B cell (primary cell): ENCODE measurements at regions of chr19 and their contacts with region 1.

Region 1: GRCh38 chr19:40190891-40191835 is at the start of gene MAP3K10:
- DNase-seq: peak; percentile 83
- ATAC-seq: peak; percentile 87
- H3K4me3 ChIP-seq: peak within 1 kb of the TSS; percentile 63 to 100 (median 99)
- H3K4me3 Mint-ChIP-seq: peak within 1 kb of the TSS; percentile 94
- H3K27ac ChIP-seq: peak within 1 kb of the TSS; percentile 83 to 85
- H3K27ac Mint-ChIP-seq: peak within 1 kb of the TSS; percentile 95
- H3K4me1 ChIP-seq: peaks cover 10 to 25% of the 10 kb centered on the region in 2 donors
- H3K4me1 Mint-ChIP-seq: peaks cover 31% of the 10 kb centered on the region
- H3K27me3 ChIP-seq: no peaks in the 10 kb centered on the region
- H3K27me3 Mint-ChIP-seq: no peaks in the 10 kb centered on the region
- CTCF ChIP-seq: no peak
- total RNA-seq, gene MAP3K10: 35.9 and 41.6 TPM in 2 replicates

Region 2: DNA sequence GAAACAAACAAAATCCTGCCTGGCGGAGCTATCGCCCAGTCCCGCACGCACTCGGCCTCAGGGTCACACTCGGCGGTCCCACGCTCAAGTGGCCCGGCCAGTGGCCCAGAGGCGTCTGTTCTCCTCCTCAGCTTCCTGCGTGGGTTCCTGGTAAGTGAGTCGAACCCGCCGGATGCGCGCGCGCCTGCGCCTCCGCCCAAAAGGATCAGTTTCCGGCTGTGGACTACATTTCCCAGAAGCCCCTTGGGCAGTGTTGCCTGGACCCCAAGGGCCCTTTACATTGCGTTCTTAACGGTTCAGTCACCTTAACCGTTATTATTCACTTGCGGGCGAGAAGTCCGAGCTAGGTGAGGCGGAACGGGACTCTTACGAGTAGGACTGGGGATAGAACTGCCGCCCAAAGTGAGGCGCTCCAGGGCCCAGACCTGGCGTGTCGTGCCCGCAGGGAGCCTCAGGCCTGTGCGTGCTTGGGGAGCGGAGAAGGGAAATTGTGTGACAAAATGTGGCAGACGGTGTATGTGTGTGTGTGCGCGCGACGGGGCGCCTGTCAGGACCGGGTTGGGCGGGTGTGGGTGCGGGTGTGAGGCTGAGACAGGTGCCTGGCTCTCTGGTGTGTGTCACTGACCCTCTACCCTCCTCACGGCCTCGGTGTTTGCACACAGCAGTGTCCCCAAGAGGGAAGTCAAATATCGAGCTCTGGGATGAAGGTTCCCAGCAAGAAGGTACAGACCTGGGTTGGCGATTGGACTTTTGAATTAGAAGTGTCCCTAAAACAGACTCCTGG is 194.2 kb before region 1 on chr19 and contains the start of gene ZNF546:
- CTCF ChIA-PET with region 1: no interaction called
- POLR2A ChIA-PET with region 1: no interaction called
- intact Hi-C with region 1: loop called (anchors 2 kb)
- DNase-seq: peak; percentile 92
- ATAC-seq: peak; percentile 93
- H3K4me3 ChIP-seq: peak within 1 kb of the TSS; percentile 59 to 98 (median 92)
- H3K4me3 Mint-ChIP-seq: peak within 1 kb of the TSS; percentile 96
- H3K27ac ChIP-seq: peak within 1 kb of the TSS; percentile 78 to 89
- H3K27ac Mint-ChIP-seq: peak within 1 kb of the TSS; percentile 92
- H3K4me1 ChIP-seq: peaks cover 9 to 16% of the 10 kb centered on the region in 2 donors
- H3K4me1 Mint-ChIP-seq: peaks cover 28% of the 10 kb centered on the region
- H3K27me3 ChIP-seq: no peaks in the 10 kb centered on the region
- H3K27me3 Mint-ChIP-seq: no peaks in the 10 kb centered on the region
- CTCF ChIP-seq: no peak
- total RNA-seq, gene ZNF546: 15.7 and 16.6 TPM in 2 replicates

Region 3: DNA sequence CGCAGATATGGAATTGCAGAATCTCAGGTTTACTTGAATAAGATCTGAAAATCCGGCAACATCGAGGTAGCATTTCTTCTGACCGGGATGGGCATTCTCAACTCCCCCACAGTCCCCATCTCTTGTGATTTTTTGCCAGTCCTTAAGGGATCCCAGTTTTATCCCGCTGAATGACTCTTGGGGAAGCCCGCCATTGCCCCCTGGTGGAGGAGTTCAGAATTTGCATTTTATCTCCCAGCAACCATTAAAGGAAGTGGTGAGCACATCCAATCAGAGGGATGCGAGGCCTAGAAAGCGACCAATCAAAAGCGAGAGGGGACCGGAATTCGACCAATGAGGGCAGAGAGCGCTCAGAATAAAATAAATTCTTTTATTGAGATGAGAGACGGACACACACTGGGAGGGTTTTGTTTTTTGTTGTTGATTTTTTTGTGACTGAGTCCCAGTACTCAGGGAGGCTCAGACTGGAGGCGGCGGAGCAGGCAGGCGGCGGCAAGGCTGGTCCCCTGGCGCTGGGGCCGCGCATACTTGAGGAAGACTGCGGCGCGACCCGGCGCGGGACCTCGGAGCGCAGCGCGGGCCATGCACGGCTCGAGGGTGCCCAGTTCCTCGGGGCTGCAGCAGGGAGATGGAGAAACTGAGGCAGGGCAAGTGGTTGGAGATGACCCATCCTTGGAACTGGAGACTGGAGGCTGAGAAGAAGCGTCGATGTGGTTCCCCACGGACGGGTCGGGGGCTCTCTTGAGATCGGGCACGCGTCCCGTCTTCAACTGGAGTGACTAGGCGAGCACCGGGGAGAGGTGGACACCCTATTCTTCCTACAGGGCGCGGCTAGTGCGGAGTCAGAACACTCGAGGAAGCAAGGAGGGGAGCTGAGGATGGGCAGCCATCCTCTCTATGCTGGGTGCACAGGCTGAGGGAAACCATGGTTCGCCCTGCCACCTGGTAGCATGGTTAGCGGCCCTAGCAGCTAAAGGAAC is 31.0 kb after region 1 on chr19:
- CTCF ChIA-PET with region 1: no interaction called
- POLR2A ChIA-PET with region 1: no interaction called
- intact Hi-C with region 1: loop called (anchors 1 kb)
- DNase-seq: peak; percentile 89
- ATAC-seq: peak; percentile 84
- H3K4me3 ChIP-seq: no peak overlapping the region
- H3K4me3 Mint-ChIP-seq: no peak overlapping the region
- H3K27ac ChIP-seq: no peak overlapping the region
- H3K27ac Mint-ChIP-seq: peak overlapping the region; percentile 1
- H3K4me1 ChIP-seq: peaks cover 30 to 42% of the 10 kb centered on the region in 2 donors
- H3K4me1 Mint-ChIP-seq: peaks cover 18% of the 10 kb centered on the region
- H3K27me3 ChIP-seq: peaks cover 0 to 65% (median 37%) of the 10 kb centered on the region in 4 experiments
- H3K27me3 Mint-ChIP-seq: peaks cover 45% of the 10 kb centered on the region
- CTCF ChIP-seq: peak; percentile 86

Region 4: GRCh38 chr19:40348125-40348913 is 157.2 kb after region 1 on chr19 and contains the starts of genes C19orf47 and PLD3:
- CTCF ChIA-PET with region 1: interaction called, 3 read pairs
- POLR2A ChIA-PET with region 1: no interaction called
- intact Hi-C with region 1: loop called (anchors 2 kb)
- DNase-seq: peak; percentile 99
- ATAC-seq: peak; percentile 94
- H3K4me3 ChIP-seq: peak within 1 kb of the TSS; percentile 59 to 90 (median 86)
- H3K4me3 Mint-ChIP-seq: peak within 1 kb of the TSS; percentile 91
- H3K27ac ChIP-seq: peak within 1 kb of the TSS; percentile 40 to 83
- H3K27ac Mint-ChIP-seq: peak within 1 kb of the TSS; percentile 97
- H3K4me1 ChIP-seq: peaks cover 12 to 17% of the 10 kb centered on the region in 2 donors
- H3K4me1 Mint-ChIP-seq: peaks cover 27% of the 10 kb centered on the region
- H3K27me3 ChIP-seq: no peaks in the 10 kb centered on the region
- H3K27me3 Mint-ChIP-seq: no peaks in the 10 kb centered on the region
- CTCF ChIP-seq: no peak
- total RNA-seq, gene C19orf47: 14.3 and 16.7 TPM in 2 replicates
- total RNA-seq, gene PLD3: 61.7 and 69.0 TPM in 2 replicates